ENCODE measurements at regions of chr12 and their contacts with region 1.

Region 1: GRCh38 chr12:10749700-10750384 is 26.7 kb upstream of the YBX3 start:
- DNase-seq: peak; percentile 34 to 73
- H3K4me3 ChIP-seq: peak overlapping the region in 3 of 4 experiments; percentile 6 to 51 (median 22); a peak in 4 of 8 replicates
- H3K27ac ChIP-seq: no peak overlapping the region
- H3K4me1 ChIP-seq: peaks cover 0 to 4% (median 0%) of the 10 kb centered on the region in 4 experiments; a peak in 1 of 7 replicates
- H3K27me3 ChIP-seq: no peaks in the 10 kb centered on the region
- CTCF ChIP-seq: peak; percentile 9 to 97 (median 88)
- EP300 ChIP-seq: 0 out of 3 replicates have a peak, but pooled peaks of 1 of the 2 experiments have one; percentile 11
- POLR2A ChIP-seq: no peak
- RAD21 ChIP-seq: peak; percentile 79 to 88

Region 2: DNA sequence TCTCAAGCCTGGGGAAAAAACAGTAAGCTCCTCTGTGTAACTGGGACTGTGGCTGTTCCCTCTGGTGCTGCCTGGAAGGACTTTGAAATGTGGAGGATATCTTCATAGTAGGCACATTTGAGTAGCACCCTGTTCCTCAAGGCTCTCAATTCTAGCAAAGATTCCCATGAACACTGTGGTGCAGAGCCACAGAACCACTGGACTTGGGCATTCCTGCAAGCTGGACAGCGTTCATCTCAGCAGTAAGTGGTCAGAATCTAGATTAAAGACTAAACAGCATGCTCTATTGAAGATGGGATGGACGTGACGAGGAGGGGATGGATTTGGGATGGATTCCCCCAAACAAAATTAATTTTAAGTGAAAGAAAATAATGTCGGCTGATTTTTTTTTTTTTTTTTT is 17.3 kb before region 1 on chr12:
- CTCF ChIA-PET with region 1: interaction called, 11 read pairs
- POLR2A ChIA-PET with region 1: no interaction called
- DNase-seq: no peak
- H3K4me3 ChIP-seq: no peak overlapping the region
- H3K27ac ChIP-seq: no peak overlapping the region
- H3K4me1 ChIP-seq: no peaks in the 10 kb centered on the region
- H3K27me3 ChIP-seq: no peaks in the 10 kb centered on the region
- CTCF ChIP-seq: no peak
- EP300 ChIP-seq: no peak
- POLR2A ChIP-seq: no peak
- RAD21 ChIP-seq: no peak

Region 3: GRCh38 chr12:10867381-10867780 is 117.5 kb after region 1 on chr12:
- CTCF ChIA-PET with region 1: no interaction called
- POLR2A ChIA-PET with region 1: no interaction called
- DNase-seq: no peak
- H3K4me3 ChIP-seq: no peak overlapping the region
- H3K27ac ChIP-seq: no peak overlapping the region
- H3K4me1 ChIP-seq: no peaks in the 10 kb centered on the region
- H3K27me3 ChIP-seq: no peaks in the 10 kb centered on the region
- CTCF ChIP-seq: peak in 2 of 3 experiments; percentile 9 to 26; a peak in 2 of 4 replicates
- EP300 ChIP-seq: no peak
- POLR2A ChIP-seq: no peak
- RAD21 ChIP-seq: peak; percentile 59 to 67

Measured in H1 (cell line).